HepG2 (cell line): ENCODE measurements at regions of chr9 and their contacts with region 1.

Region 1: DNA sequence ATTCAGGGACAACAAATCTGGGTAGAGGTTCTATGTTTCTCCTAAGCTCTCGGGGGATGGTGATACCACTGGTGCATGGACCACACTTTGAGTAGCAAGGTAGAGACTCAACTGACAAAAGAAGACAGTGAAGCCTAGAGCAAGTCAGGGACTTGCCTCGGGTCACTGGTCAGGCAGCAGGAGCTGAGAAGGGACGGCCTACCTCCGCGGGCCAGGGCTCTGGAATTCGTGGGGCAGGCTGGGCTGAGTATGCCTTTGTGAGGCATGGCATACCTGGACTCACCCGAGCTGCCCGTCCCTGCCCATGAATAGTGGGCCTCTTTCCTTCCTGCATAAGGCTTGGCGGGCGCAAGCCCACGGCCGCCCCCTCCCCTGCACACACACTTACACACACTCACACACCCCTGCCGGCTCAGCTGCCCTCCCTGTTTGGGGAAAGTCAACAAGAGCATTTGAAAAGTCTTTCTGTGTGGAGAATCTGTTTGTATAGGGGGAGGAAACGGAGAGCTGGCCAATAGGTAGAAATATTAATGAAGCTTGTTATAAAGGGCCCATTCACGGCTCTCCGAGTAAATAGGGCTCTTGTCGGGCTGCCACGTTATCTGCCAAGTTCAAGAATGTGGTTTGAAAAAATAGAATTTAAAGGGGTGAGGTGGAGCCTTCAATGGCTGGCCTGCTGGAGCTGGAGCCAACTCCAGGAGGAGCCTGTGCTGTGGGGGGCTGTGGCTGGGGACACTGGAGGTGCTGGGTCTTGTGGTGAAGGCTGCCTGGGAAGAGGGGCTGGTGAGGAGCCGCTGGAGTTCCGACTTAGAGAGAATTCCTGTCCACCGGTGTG is 19.1 kb upstream of the KIF12 start:
- DNase-seq: peak; percentile 99
- ATAC-seq: peak; percentile 81
- H3K4me3 ChIP-seq: peak overlapping the region; percentile 27 to 64 (median 48); a peak in 5 of 6 replicates
- H3K27ac ChIP-seq: peak overlapping the region; percentile 87
- H3K4me1 ChIP-seq: peaks cover 93% of the 10 kb centered on the region
- H3K27me3 ChIP-seq: no peaks in the 10 kb centered on the region
- CTCF ChIP-seq: no peak; the same call in 1 of the 2 replicates
- EP300 ChIP-seq: peak in 1 of 2 experiments; percentile 93; a peak in 2 of 4 replicates
- POLR2A ChIP-seq: peak in 1 of 2 experiments; percentile 59; a peak in 2 of 4 replicates
- RAD21 ChIP-seq: 0 out of 2 replicates have a peak, but pooled peaks have one; percentile 18

Region 2: GRCh38 chr9:114098016-114098935 is 19.9 kb before region 1 on chr9:
- CTCF ChIA-PET with region 1: no interaction called
- POLR2A ChIA-PET with region 1: interaction called, 17 read pairs
- in situ Hi-C with region 1: no loop called
- intact Hi-C with region 1: no loop called
- DNase-seq: no peak
- ATAC-seq: peak; percentile 43
- H3K4me3 ChIP-seq: peak overlapping the region; percentile 45 to 67 (median 49); a peak in 5 of 6 replicates
- H3K27ac ChIP-seq: peak overlapping the region; percentile 55
- H3K4me1 ChIP-seq: peaks cover 53% of the 10 kb centered on the region
- H3K27me3 ChIP-seq: no peaks in the 10 kb centered on the region
- CTCF ChIP-seq: no peak
- EP300 ChIP-seq: no peak
- POLR2A ChIP-seq: no peak
- RAD21 ChIP-seq: no peak

Region 3: DNA sequence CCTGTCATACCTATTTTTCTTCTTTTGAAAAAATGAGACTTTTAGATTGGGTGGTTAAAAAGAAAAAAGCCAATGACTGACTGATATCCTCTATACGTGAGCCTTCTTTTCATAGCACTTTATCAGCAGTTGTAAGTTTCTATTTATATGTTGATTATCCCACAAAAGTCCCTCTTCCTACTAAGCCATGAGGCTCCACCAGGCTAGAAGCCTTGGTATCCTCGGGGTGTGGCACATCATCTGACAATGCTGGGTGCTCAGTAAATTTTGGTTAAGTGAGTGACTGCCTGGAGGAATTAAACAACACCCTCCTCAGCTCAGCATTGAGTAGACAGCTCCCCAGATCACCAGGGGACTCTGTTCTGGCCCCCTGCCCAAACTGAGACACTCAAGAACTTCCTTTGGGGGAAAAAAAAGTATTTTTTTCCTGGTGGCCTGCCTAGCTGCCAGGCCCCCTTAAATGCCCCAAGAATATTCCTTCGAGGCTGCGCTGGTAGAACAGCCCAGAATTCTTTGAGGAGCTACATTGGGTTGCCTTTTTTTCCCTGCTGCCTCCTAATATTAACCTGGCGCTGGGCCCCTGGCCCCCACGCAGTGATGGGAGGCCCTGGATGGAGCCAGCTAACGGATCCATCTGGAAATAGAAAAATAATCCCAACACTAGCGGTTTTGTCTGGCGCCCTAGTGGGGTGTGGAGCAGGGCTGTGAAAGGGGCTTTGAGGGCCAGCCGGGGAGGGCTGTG is 13.8 kb after region 1 on chr9:
- CTCF ChIA-PET with region 1: no interaction called
- POLR2A ChIA-PET with region 1: interaction called, 30 read pairs
- in situ Hi-C with region 1: no loop called
- intact Hi-C with region 1: loop called (anchors 2 kb)
- DNase-seq: no peak
- ATAC-seq: no peak
- H3K4me3 ChIP-seq: no peak overlapping the region
- H3K27ac ChIP-seq: no peak overlapping the region
- H3K4me1 ChIP-seq: peaks cover 62% of the 10 kb centered on the region
- H3K27me3 ChIP-seq: peaks cover 0 to 1% of the 10 kb centered on the region in 2 experiments; a peak in 1 of 5 replicates
- CTCF ChIP-seq: no peak
- EP300 ChIP-seq: no peak
- POLR2A ChIP-seq: no peak
- RAD21 ChIP-seq: no peak

Region 4: GRCh38 chr9:114141553-114142402 is 23.6 kb after region 1 on chr9:
- CTCF ChIA-PET with region 1: no interaction called
- POLR2A ChIA-PET with region 1: interaction called, 87 read pairs
- in situ Hi-C with region 1: no loop called
- intact Hi-C with region 1: no loop called
- DNase-seq: peak; percentile 82
- ATAC-seq: peak; percentile 64
- H3K4me3 ChIP-seq: peak overlapping the region in 1 of 3 experiments; percentile 39; a peak in 2 of 6 replicates
- H3K27ac ChIP-seq: peak overlapping the region; percentile 6
- H3K4me1 ChIP-seq: peaks cover 78% of the 10 kb centered on the region
- H3K27me3 ChIP-seq: no peaks in the 10 kb centered on the region; a peak in 1 of 5 replicates
- CTCF ChIP-seq: no peak
- EP300 ChIP-seq: peak in 1 of 2 experiments; percentile 74; a peak in 2 of 4 replicates
- POLR2A ChIP-seq: no peak
- RAD21 ChIP-seq: no peak

Region 5: GRCh38 chr9:114452219-114453165 is 334.3 kb after region 1 on chr9:
- CTCF ChIA-PET with region 1: no interaction called
- POLR2A ChIA-PET with region 1: no interaction called
- in situ Hi-C with region 1: no loop called
- intact Hi-C with region 1: no loop called
- DNase-seq: no peak
- ATAC-seq: no peak
- H3K4me3 ChIP-seq: no peak overlapping the region
- H3K27ac ChIP-seq: no peak overlapping the region
- H3K4me1 ChIP-seq: peaks cover 14% of the 10 kb centered on the region
- H3K27me3 ChIP-seq: no peaks in the 10 kb centered on the region
- CTCF ChIP-seq: no peak
- EP300 ChIP-seq: no peak
- POLR2A ChIP-seq: no peak
- RAD21 ChIP-seq: no peak

Region 6: GRCh38 chr9:115008536-115009270 is 890.5 kb after region 1 on chr9:
- CTCF ChIA-PET with region 1: no interaction called
- POLR2A ChIA-PET with region 1: no interaction called
- in situ Hi-C with region 1: no loop called
- intact Hi-C with region 1: no loop called
- DNase-seq: no peak
- ATAC-seq: no peak
- H3K4me3 ChIP-seq: no peak overlapping the region
- H3K27ac ChIP-seq: no peak overlapping the region
- H3K4me1 ChIP-seq: no peaks in the 10 kb centered on the region
- H3K27me3 ChIP-seq: no peaks in the 10 kb centered on the region; a peak in 1 of 5 replicates
- CTCF ChIP-seq: no peak
- EP300 ChIP-seq: no peak
- POLR2A ChIP-seq: no peak
- RAD21 ChIP-seq: no peak